ENCODE measurements at regions of chr18 and their contacts with region 1.

Region 1: DNA sequence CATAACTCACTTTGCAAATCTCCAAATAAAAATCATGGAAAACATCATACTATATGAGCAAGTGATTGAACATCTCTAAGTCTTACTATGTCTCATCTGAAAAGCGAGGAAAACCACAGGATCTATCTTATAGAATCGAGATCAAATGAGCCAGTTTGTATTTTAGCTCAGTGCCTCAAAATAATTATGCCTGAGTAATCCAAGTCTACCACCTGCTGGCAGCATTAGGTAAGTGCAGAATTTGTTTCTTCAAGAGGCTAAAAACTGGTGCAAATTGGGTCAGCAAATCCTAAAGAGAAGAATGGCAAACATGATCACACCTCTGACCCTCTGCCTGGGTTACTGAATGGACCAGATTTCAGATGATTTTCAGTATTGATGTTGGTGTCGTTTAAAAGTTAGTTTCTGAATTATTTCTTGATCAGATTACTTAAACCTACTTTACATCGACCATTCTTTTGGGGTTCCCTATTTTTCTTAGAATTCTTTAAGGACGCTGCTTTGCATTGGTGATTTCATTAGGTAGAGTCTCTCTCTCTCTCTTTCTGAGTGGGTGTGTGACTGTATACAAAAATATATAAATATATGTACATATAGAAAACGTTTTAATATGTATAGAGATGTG is 12.7 kb upstream of the FHOD3 start:
- DNase-seq: no peak
- ATAC-seq: peak; percentile 45

Region 2: GRCh38 chr18:35624146-35624545 is 660.6 kb before region 1 on chr18:
- intact Hi-C with region 1: no loop called
- DNase-seq: no peak
- ATAC-seq: no peak

Region 3: DNA sequence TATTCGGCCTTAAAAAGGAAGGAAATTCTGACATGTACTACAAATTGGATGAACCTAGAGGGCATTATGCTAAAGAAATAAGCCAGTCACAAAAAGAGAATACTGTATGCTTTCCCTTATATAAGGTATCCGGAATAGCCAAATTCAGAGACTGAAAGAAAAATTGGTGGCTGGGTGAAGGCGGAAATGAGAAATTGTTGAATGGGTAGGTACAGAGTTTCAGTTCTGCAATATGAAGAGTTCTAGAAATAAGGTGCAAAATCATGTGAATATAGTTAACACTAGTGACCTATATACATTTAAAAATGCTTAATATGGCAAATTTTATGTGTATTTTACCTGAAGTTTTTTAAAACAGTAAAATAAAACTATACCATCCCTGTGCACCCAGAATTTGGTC is 269.2 kb before region 1 on chr18:
- intact Hi-C with region 1: loop called (anchors 5 kb)
- DNase-seq: no peak
- ATAC-seq: no peak

Region 4: GRCh38 chr18:36095936-36096519 is 188.8 kb before region 1 on chr18:
- intact Hi-C with region 1: loop called (anchors 2 kb)
- DNase-seq: no peak
- ATAC-seq: no peak